Vagina (tissue), 2 donors: ENCODE measurements at regions of chr3 and their contacts with region 1.

Region 1: DNA sequence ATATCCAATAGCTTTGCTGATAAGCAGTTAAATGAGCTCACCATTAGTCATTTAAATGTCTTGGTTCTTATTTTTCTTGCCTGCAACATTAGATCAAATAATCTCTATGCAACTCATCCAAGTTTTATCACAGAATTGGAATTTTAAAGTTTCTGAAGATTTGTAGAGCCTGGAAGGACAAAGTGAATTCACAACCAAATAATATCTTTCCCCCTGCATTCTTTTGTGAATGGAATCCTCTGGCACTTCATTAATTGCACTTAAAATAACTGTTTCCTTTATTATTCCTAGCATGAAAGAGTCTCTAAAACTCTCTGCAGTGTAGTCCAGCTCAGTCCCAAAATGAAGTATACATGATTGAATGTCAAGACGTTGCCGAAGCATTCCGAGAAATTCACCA is 345.6 kb upstream of the TGFBR2 start:
- DNase-seq: no peak
- H3K4me3 ChIP-seq: no peak overlapping the region
- H3K27ac ChIP-seq: no peak overlapping the region
- H3K4me1 ChIP-seq: peaks cover 16% of the 10 kb centered on the region
- H3K27me3 ChIP-seq: no peaks in the 10 kb centered on the region
- CTCF ChIP-seq: no peak
- POLR2A ChIP-seq: no peak

Region 2: DNA sequence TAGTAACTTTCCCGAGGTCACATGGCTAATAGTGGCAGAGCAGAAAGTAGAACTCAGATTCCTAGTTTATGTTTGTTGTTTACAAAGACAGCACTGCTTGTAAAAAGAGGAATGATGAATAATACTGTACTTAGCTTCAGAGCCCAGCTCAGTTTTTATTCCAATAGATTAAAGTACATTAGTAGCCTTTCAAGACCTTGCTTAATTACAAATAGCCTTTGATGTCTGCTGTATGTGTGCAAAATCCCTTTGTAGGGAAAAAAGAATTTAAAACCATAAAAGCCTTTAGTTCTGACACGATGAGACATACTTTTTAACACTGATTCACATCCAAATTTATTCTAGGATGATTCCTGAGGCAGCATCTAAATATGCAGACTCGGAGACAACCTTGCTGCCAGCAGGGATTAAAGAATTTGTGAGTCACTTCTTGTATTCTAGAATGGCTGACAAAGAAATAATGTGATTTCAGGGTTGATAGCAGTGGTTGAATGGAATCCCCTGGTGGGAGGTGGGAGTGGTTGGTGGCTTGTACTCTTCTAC is 21.5 kb after region 1 on chr3:
- intact Hi-C with region 1: loop called (anchors 2 kb)
- DNase-seq: no peak
- H3K4me3 ChIP-seq: no peak overlapping the region
- H3K27ac ChIP-seq: no peak overlapping the region
- H3K4me1 ChIP-seq: peaks cover 29% of the 10 kb centered on the region
- H3K27me3 ChIP-seq: no peaks in the 10 kb centered on the region
- CTCF ChIP-seq: no peak
- POLR2A ChIP-seq: no peak

Region 3: DNA sequence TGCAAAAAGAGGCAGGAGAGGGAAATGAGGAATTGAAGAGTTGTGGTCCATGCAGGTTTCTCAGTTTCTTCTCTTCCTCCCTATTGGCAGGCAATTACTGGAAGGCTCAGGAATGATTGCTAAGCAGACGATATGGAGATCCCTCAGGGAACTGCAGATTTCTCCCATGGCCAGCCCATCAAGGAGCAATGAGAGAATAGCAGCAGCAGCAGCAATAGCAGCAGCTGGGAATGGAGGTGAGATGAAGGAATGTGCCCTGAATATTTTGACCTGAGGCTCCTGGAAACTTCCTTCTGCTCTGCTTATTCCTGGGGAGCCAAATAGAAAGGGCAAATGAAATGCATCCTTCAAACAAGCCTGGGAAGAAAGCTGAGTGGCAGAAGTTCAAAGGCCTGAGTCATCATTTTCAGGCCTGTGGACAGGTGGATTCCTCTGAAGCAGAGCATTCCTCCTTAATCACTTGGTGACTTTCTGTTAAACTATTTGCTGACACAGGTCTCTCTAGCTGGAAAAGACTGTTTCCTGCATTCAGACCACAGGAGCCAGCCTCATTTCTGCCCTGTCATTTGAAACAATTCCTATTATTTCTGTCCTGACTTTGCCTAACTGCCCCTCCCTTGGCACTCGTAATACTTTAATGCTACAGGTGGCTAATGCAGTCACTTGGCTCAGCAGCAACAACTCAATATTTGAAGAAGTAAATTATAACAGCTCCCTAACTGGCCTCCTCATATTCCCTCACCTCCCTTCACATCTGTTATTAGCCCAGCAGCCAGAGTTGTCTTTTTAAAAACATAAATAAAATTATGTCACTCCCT is 780.6 kb after region 1 on chr3:
- intact Hi-C with region 1: no loop called
- DNase-seq: no peak
- H3K4me3 ChIP-seq: no peak overlapping the region
- H3K27ac ChIP-seq: no peak overlapping the region
- H3K4me1 ChIP-seq: no peaks in the 10 kb centered on the region
- H3K27me3 ChIP-seq: no peaks in the 10 kb centered on the region
- CTCF ChIP-seq: no peak
- POLR2A ChIP-seq: no peak